PC-3 (cell line): ENCODE measurements at regions of chr3 and their contacts with region 1.

Region 1: DNA sequence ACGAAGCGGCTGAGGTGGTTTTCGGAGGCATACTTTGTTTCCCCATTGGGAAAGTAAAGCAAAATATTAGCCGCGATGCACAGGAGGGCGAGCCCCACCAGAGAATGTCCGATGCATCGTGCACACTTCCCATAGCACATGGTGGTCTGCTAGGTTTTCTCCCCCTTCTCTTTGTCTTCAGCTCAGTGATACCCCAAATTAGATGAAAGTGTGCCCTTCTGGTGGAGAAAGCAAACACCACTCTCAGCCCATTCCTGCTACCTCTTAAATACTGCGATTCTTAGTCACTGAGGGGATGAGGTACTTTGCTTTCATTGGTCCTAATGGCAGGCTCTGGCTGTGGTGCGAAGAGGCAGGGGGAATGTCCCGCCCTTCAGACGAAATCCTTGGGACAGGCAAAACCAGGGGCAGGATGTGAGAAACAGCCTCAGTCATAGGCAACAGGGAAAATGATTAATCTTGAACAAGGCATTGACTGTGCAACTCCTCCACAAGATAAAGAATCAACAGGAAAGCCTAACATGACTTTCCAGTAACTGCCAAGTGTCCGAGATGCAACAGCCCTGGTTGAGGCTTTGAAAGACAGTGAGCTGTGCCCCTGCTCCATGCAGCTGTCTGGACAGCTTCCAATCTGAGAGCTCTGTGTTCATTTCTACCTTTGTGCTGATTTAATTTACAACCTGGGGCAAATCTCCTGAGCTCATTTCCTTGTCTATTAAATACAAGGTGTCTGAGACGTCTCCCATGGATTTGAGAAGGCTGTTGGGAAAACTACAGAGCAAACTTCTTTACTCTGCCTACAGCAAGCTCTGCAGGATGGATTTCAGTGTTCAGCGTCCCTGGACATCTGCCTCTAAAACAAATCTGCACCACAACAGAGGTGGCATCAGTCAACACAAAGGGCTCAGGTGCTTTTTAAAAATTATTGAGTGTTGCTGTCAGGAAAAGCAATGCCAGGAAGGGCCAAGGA is at the start of gene TM4SF1:
- DNase-seq: peak; percentile 98
- ATAC-seq: peak; percentile 80
- H3K4me3 ChIP-seq: peak within 1 kb of the TSS; percentile 90
- H3K27ac ChIP-seq: peak within 1 kb of the TSS; percentile 99
- H3K4me1 ChIP-seq: peaks cover 63% of the 10 kb centered on the region
- H3K27me3 ChIP-seq: no peaks in the 10 kb centered on the region
- CTCF ChIP-seq: no peak
- total RNA-seq, gene TM4SF1: 408 and 535 TPM in 2 replicates

Region 2: GRCh38 chr3:148998715-148999423 is 378.8 kb before region 1 on chr3:
- CTCF ChIA-PET with region 1: no interaction called
- POLR2A ChIA-PET with region 1: no interaction called
- intact Hi-C with region 1: no loop called
- DNase-seq: no peak
- ATAC-seq: no peak
- H3K4me3 ChIP-seq: no peak overlapping the region
- H3K27ac ChIP-seq: no peak overlapping the region
- H3K4me1 ChIP-seq: peaks cover 5% of the 10 kb centered on the region
- H3K27me3 ChIP-seq: no peaks in the 10 kb centered on the region
- CTCF ChIP-seq: no peak

Region 3: GRCh38 chr3:149291178-149291577 is 86.5 kb before region 1 on chr3:
- CTCF ChIA-PET with region 1: no interaction called
- POLR2A ChIA-PET with region 1: no interaction called
- intact Hi-C with region 1: no loop called
- DNase-seq: no peak
- ATAC-seq: no peak; the same call in 1 of the 2 replicates
- H3K4me3 ChIP-seq: no peak overlapping the region
- H3K27ac ChIP-seq: no peak overlapping the region
- H3K4me1 ChIP-seq: no peaks in the 10 kb centered on the region
- H3K27me3 ChIP-seq: no peaks in the 10 kb centered on the region
- CTCF ChIP-seq: peak; percentile 75

Region 4: GRCh38 chr3:149330609-149331331 is 46.9 kb before region 1 on chr3:
- CTCF ChIA-PET with region 1: no interaction called
- POLR2A ChIA-PET with region 1: interaction called, 10 read pairs
- intact Hi-C with region 1: no loop called
- DNase-seq: peak; percentile 79
- ATAC-seq: peak; percentile 36; the same call in 1 of the 2 replicates
- H3K4me3 ChIP-seq: no peak overlapping the region
- H3K27ac ChIP-seq: peak overlapping the region; percentile 6; the same call in 1 of the 2 replicates
- H3K4me1 ChIP-seq: peaks cover 41% of the 10 kb centered on the region
- H3K27me3 ChIP-seq: no peaks in the 10 kb centered on the region
- CTCF ChIP-seq: no peak

Region 5: GRCh38 chr3:149366941-149367840 is 10.5 kb before region 1 on chr3:
- CTCF ChIA-PET with region 1: interaction called, 3 read pairs
- POLR2A ChIA-PET with region 1: interaction called, 28 read pairs
- intact Hi-C with region 1: loop called (anchors 1 kb)
- DNase-seq: peak; percentile 99
- ATAC-seq: peak; percentile 77
- H3K4me3 ChIP-seq: 0 out of 2 replicates have a peak overlapping the region, but pooled peaks have one; percentile 27
- H3K27ac ChIP-seq: peak overlapping the region; percentile 99
- H3K4me1 ChIP-seq: peaks cover 66% of the 10 kb centered on the region
- H3K27me3 ChIP-seq: no peaks in the 10 kb centered on the region
- CTCF ChIP-seq: no peak

Region 6: DNA sequence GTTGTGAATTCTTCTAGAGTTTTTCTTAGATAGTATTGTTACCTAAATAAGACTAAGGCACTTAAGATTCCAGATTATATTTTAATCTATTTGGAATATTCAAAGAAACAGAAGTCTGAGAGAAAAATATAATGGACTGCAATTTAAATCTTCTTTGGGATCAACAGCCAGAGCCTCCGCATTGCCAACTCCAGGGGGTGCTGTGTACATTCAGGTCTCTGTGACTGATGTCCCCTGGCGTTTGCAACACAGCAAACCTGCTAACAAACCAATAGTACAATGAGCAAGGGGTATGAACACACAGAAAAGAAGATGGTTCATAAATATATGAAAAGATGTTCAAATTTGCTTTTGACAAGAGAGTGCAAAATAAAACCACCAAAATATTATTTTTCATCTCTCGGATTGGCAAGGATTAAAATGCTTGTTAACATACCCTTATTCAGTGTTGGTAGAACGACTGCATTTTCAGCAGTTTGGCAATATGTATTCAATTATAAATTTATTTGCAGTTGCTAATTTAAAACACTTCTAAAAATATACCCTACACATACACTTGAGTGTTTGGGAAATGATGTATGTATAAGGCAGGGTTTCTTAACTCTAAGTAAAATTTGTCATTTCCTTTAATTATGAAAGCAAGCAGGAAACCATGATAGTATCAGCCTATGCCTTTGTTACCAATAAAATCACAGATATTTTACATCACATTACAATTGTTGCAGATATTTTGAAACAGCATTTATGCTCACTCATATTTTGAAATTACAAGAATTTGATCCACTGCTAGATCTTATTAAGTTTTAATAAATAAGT is 15.9 kb after region 1 on chr3:
- CTCF ChIA-PET with region 1: no interaction called
- POLR2A ChIA-PET with region 1: interaction called, 34 read pairs
- intact Hi-C with region 1: no loop called
- DNase-seq: peak; percentile 84
- ATAC-seq: peak; percentile 16; the same call in 1 of the 2 replicates
- H3K4me3 ChIP-seq: no peak overlapping the region
- H3K27ac ChIP-seq: peak overlapping the region; percentile 96
- H3K4me1 ChIP-seq: peaks cover 81% of the 10 kb centered on the region
- H3K27me3 ChIP-seq: no peaks in the 10 kb centered on the region
- CTCF ChIP-seq: peak; percentile 99

Region 7: DNA sequence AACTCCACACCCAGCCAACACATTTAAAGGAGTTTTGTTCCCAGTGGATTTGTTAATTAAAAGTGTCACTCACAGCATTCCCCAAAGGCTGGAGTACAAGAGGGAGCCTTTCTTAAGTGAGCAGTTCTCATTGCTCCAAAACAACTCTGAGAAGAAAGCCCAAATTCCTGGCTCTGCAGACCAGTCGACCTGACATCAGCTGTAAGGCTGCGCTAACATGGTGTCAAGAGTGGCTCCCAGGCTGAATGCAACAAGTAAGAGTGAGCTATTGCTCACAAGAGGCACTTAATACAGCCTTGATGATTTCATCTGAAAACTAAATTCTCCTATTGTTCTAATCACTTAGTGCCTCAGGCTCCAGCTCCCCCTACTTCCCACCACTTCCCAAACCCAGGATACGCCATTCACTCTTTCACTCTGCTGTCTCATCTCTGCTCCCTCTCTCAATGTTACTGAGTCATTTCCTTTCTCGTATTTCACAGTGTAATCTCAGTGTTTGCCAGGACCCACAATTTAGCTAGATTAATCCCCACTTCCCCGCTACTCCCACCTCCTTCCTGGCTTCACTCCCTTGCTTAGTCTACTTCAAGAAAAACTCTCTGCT is 198.4 kb after region 1 on chr3:
- CTCF ChIA-PET with region 1: no interaction called
- POLR2A ChIA-PET with region 1: interaction called, 11 read pairs
- intact Hi-C with region 1: loop called (anchors 5 kb)
- DNase-seq: peak; percentile 98
- ATAC-seq: peak; percentile 62
- H3K4me3 ChIP-seq: peak overlapping the region; percentile 55
- H3K27ac ChIP-seq: peak overlapping the region; percentile 99
- H3K4me1 ChIP-seq: peaks cover 92% of the 10 kb centered on the region
- H3K27me3 ChIP-seq: no peaks in the 10 kb centered on the region
- CTCF ChIP-seq: no peak